KBM-7 (cell line): ENCODE measurements at regions of chr3 and their contacts with region 1.

Region 1: DNA sequence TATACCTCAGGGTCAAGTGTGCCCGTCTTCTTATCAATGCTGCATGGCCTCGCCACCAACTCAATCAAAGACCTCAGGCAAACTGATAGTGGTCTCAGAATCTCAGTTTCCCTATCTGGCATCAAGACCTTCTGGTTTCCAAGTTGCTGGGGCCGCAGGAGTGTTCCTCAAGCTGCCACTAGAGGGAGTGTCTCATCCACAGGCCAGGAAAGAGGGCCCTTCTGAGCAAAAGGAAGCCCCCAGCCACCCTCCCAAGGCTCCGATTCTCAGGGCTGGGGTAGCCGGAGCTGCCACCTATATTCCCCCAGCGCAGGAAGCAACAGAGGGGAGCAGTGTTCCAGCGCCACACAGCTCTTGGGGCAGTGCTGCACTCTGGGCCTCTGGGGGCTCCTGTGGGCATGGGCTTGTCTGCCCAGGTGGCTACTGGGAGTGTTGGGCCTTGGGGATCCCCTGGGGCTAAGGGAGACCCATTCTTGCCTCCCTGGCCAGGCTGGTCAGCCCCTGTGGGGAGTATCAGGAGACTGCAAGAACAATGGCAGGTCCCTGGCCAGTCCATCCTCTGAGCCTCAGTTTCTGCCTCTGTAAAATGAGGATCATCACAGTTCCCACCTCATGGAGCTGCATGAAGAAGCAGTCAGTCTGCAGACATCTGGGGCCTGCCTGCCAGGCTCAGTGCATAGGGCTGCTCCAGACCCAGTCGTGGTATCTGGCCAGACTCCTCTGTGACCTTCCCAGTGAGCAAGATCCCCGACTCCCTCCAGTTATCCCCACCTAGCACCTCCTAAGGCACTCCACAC is 23.4 kb upstream of the SEC13 start:
- DNase-seq: peak; percentile 58

Region 2: DNA sequence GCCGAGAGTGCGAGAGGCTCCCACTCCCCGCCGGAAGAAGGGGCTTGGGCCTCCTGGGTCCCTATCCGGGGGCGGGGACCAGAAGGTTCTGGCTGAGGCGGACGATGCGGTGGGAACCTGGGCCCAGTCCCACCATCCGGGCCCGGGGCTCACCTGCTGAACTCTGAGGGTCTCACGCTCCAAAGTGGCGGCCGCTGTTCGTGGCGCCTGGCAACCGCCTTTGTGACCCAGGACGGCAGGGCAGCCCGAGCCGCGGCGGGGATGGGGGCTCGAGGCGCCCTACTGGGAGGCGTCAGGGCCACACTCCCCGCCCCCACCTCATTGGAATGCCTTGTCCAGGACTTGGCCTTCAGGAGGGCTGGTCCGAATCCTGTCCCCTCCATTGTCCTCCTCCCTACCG is 236.3 kb before region 1 on chr3 and contains the start of gene FANCD2OS:
- in situ Hi-C with region 1: no loop called
- DNase-seq: no peak

Region 3: GRCh38 chr3:10738688-10739372 is 394.5 kb after region 1 on chr3:
- in situ Hi-C with region 1: loop called (anchors 25 kb)
- DNase-seq: peak; percentile 80

Region 4: DNA sequence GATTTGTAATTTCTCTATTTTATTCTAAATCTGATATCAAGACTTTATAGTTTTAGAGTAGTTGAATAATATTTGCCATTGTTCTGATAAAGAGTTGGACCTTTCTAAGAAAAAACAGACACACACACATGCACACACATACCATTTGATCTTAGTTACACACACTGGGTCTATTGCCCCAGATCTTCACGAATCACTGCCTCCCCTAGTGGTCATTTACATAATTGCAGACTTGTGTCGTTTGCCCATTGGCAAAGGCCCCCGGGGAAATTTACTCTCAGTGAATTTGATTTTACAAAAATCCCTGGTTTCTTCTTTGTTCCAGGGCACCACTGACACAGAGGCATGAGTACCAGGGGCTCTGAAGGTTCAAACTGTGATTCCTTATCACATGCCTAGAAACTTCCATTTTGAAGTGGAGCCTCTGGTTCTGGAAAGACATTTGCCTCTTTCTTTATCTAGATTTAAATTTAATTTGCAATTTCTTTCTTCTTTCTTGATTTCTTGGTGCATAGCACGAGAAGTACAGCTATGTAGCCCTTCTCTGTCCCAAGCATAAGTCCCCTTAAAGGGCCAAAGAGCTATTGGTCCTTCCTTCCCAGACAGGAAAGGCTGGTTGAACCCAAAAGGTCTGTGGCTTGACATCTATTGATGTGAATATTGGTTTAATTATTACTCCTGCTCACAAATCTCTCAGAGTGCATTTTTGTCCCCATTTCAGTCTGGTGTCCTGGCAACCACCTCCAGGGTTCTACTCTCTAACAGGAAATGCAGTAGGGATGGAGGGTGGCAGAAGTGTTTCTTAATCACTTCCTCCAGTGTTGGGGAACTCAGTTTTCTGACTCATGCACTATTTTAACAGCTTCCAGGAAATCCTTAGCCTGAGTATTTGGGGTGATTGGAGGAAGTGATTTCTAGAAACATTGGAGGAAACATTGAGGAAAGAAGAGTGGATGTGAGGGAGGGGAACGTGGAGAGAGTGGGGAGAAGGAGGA is 439.3 kb after region 1 on chr3:
- in situ Hi-C with region 1: no loop called
- DNase-seq: peak; percentile 36